PC-9 (cell line): ENCODE measurements at regions of chr7 and their contacts with region 1.

Region 1: DNA sequence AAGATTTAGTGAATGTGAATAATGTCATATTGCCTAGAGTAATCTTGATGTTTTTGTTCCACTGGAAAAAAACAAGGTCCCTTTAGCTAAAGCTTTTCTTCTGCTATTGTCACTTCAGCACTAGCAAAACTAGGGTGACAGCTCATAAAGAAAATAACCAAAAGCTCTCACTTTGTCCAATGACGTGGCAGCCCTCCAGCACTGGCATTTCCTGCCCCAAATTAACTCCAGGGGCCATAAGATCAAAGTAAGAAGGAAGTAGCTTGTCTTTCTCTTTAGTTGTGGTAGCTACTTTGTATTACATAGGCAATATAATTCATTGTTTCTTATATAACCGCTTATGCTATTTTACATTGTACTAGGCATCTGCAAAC is 47.3 kb downstream of the LRRN3 start:
- DNase-seq: peak; percentile 43 to 59
- H3K4me3 ChIP-seq: no peak overlapping the region
- H3K27ac ChIP-seq: 0 out of 2 replicates have a peak overlapping the region, but pooled peaks have one; percentile 13
- H3K4me1 ChIP-seq: 0 out of 2 replicates have a peak, but pooled peaks cover 6% of the 10 kb centered on the region
- H3K27me3 ChIP-seq: no peaks in the 10 kb centered on the region
- CTCF ChIP-seq: no peak

Region 2: DNA sequence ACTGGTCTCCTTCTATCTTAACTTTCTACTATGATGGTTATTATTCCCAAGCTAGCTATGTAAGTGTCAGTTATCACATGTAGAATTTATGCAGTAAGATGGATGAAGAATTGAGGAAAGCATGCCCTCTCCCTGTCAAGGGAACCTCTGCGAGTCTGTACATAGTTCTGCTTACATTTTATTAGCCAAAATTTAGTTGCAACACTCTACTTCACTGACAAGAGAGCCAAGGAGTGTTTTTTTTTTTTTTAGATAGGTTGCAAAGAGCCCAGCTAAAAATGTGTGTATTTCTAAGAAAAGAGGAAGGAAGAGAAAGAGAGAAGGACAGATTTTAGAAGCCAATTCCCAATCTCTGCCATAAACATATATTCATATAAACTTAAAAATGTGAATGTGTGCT is 405.0 kb before region 1 on chr7:
- CTCF ChIA-PET with region 1: no interaction called
- POLR2A ChIA-PET with region 1: no interaction called
- intact Hi-C with region 1: no loop called
- DNase-seq: no peak
- H3K4me3 ChIP-seq: no peak overlapping the region
- H3K27ac ChIP-seq: no peak overlapping the region
- H3K4me1 ChIP-seq: no peaks in the 10 kb centered on the region
- H3K27me3 ChIP-seq: no peaks in the 10 kb centered on the region
- CTCF ChIP-seq: no peak

Region 3: GRCh38 chr7:111126987-111127386 is 11.2 kb before region 1 on chr7:
- CTCF ChIA-PET with region 1: no interaction called
- POLR2A ChIA-PET with region 1: no interaction called
- intact Hi-C with region 1: no loop called
- DNase-seq: no peak
- H3K4me3 ChIP-seq: no peak overlapping the region
- H3K27ac ChIP-seq: no peak overlapping the region
- H3K4me1 ChIP-seq: no peaks in the 10 kb centered on the region
- H3K27me3 ChIP-seq: no peaks in the 10 kb centered on the region
- CTCF ChIP-seq: no peak

Region 4: DNA sequence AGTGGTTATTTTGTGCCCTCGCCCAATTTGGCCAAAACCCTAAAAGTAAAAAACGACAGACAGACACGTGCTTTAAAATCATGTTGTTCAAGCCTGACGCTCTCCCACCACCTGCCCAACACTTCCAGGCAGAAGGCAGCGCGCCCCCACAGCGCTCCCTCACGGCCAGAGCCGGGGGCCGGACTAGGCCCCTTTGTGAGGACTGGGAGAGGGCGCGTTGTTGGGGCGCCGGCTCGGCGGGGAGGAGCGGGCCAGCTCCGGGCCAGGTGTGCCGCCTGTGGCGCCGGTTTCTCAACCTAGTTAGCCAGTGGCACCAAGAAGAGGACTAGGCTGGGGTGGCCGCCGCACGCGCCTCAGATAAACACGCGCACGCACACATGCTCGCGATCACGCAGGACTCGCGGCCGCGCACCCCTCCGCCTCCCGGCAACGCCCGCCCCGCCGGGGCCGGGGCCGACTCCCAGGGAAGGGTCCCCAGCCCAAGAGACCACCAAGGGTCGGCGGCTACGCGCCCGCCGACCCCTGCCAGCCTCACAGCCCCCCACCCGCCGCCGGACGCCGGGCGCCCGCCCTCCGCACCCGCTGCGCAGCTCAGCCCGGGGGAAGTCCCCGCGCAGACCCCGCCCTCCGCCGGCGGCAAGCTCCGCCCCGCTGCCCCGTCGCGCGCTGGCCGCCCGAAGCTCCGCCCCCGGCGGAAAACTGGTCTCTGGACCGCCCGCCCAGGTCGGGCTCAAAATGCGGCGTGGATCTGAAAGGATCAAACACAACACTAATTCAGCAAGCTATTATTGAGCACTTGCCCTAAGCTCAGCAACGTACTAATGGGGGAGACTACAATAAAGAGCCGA is 423.9 kb after region 1 on chr7 and contains the start of gene IMMP2L:
- CTCF ChIA-PET with region 1: no interaction called
- POLR2A ChIA-PET with region 1: interaction called, 15 read pairs
- intact Hi-C with region 1: no loop called
- DNase-seq: peak; percentile 54 to 95
- H3K4me3 ChIP-seq: peak within 1 kb of the TSS; percentile 69
- H3K27ac ChIP-seq: peak within 1 kb of the TSS; percentile 61
- H3K4me1 ChIP-seq: peaks cover 20% of the 10 kb centered on the region
- H3K27me3 ChIP-seq: no peaks in the 10 kb centered on the region
- CTCF ChIP-seq: no peak; the same call in 1 of the 2 replicates
- total RNA-seq, gene IMMP2L: 40.5 and 51.0 TPM in 2 replicates

Region 5: DNA sequence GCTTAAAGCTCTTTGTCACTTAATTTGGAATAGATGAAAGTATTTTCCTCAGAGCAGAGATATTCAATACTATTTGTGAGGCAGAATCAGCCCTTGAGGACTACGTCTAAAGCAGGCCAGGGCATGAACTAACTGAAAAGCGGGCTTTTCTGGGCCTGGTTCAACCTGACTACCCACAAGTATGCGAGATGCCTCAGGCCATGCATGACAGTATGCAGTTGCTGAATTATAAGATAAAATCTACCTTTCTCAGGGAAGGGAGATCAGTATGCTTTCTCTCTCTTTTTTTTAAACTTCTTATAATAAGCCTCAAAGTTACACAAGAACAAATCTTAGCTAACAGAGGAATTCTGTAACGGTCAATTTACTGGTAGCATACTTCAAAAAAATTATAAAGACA is 1631.9 kb after region 1 on chr7:
- CTCF ChIA-PET with region 1: no interaction called
- POLR2A ChIA-PET with region 1: interaction called, 11 read pairs
- intact Hi-C with region 1: no loop called
- DNase-seq: peak; percentile 77 to 80
- H3K4me3 ChIP-seq: no peak overlapping the region
- H3K27ac ChIP-seq: no peak overlapping the region
- H3K4me1 ChIP-seq: no peaks in the 10 kb centered on the region
- H3K27me3 ChIP-seq: no peaks in the 10 kb centered on the region
- CTCF ChIP-seq: no peak